MCF 10A (cell line): ENCODE measurements at regions of chr3 and their contacts with region 1.

Region 1: GRCh38 chr3:27134165-27134796 is 234.9 kb downstream of the NEK10 start:
- DNase-seq: peak; percentile 80
- H3K4me3 Mint-ChIP-seq: no peak overlapping the region
- H3K27ac Mint-ChIP-seq: no peak overlapping the region
- H3K4me1 Mint-ChIP-seq: no peaks in the 10 kb centered on the region
- H3K27me3 Mint-ChIP-seq: no peaks in the 10 kb centered on the region
- CTCF ChIP-seq: peak; percentile 82

Region 2: DNA sequence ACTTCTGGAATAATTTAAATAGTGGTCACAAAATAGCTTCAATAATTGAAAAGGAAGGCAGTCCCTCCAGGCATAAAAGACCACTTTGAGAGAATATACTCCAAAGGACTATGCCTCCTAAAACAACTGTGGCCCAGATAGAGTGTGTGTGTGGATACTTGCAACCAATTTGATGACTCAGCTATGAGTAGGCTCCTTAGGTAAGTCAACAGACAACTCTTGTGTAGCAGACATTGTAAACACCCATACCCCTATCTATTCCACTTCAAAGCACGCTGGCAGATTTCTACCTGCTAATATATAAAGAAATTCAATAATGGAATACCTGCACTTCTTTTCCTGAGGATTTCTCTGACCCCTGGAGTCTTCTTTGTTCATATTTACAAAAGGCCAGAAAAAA is 19.6 kb before region 1 on chr3:
- CTCF ChIA-PET with region 1: interaction called, 17 read pairs
- POLR2A ChIA-PET with region 1: no interaction called
- intact Hi-C with region 1: no loop called
- DNase-seq: peak; percentile 38
- H3K4me3 Mint-ChIP-seq: no peak overlapping the region
- H3K27ac Mint-ChIP-seq: no peak overlapping the region
- H3K4me1 Mint-ChIP-seq: peaks cover 9% of the 10 kb centered on the region
- H3K27me3 Mint-ChIP-seq: no peaks in the 10 kb centered on the region
- CTCF ChIP-seq: no peak

Region 3: DNA sequence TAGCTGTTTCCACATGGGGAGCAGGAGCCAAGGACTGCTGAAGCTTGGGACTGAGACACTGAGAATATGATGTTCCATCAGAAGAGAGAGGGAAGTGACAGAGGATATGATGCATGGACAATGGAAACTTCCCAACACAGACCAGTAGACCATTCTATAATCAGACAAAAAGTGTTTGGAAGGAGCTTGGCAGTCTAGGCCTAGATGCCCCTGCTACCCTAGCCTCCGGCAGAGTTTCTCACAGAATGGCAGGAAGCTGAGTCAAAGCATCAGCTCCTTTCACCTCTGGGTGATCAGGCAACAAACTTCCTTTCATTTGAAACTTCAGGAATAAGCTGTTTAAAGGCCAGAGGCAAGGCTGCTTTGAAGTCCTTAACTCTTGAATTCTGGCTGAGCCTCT is 12.9 kb after region 1 on chr3:
- CTCF ChIA-PET with region 1: interaction called, 31 read pairs
- POLR2A ChIA-PET with region 1: no interaction called
- intact Hi-C with region 1: no loop called
- DNase-seq: peak; percentile 31
- H3K4me3 Mint-ChIP-seq: no peak overlapping the region
- H3K27ac Mint-ChIP-seq: no peak overlapping the region
- H3K4me1 Mint-ChIP-seq: no peaks in the 10 kb centered on the region
- H3K27me3 Mint-ChIP-seq: no peaks in the 10 kb centered on the region
- CTCF ChIP-seq: no peak

Region 4: DNA sequence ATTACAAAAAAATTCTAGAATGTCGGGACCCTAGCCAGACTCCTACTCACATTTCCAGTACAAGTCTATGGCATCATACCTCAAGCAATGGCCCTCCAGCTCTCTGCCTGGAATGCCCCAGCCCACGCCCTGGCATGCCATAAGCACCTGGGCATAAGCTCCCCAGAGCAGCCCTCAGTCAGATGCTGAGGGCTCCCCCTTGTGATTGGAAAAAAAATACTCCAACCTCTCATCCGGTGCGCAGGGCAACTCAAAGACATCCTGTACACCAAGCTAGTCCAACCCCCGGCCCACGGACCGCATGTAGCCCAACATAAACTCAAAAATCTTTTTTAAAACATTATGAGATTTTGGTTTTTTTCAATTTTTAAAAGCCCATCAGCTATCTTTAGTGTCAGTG is 119.5 kb after region 1 on chr3:
- CTCF ChIA-PET with region 1: interaction called, 70 read pairs
- POLR2A ChIA-PET with region 1: no interaction called
- intact Hi-C with region 1: loop called (anchors 1 kb)
- DNase-seq: peak; percentile 69
- H3K4me3 Mint-ChIP-seq: no peak overlapping the region
- H3K27ac Mint-ChIP-seq: no peak overlapping the region
- H3K4me1 Mint-ChIP-seq: no peaks in the 10 kb centered on the region
- H3K27me3 Mint-ChIP-seq: no peaks in the 10 kb centered on the region
- CTCF ChIP-seq: peak; percentile 42

Region 5: DNA sequence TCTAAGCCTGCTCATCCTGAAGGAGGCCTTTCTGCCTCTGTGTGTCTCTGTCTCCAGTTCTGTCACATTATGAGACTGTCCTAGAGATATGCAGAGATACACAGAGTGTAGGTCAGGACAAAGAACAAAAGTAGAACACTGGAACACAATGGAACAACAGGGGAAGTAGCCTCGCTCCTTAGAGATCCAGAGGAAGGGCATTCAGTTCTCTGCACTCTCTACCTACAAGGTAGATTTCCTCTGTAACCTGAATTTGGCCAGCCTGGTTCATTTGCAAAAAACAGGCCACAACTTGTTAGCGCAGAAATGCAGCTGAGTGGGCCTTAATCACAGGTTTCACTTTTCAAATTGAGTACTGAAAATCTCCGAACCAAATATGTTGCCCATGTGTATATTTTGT is 215.6 kb after region 1 on chr3:
- CTCF ChIA-PET with region 1: interaction called, 5 read pairs
- POLR2A ChIA-PET with region 1: no interaction called
- intact Hi-C with region 1: loop called (anchors 5 kb)
- DNase-seq: no peak
- H3K4me3 Mint-ChIP-seq: no peak overlapping the region
- H3K27ac Mint-ChIP-seq: no peak overlapping the region
- H3K4me1 Mint-ChIP-seq: peaks cover 19% of the 10 kb centered on the region
- H3K27me3 Mint-ChIP-seq: no peaks in the 10 kb centered on the region
- CTCF ChIP-seq: no peak

Region 6: GRCh38 chr3:27681245-27681748 is 547.0 kb after region 1 on chr3:
- CTCF ChIA-PET with region 1: interaction called, 8 read pairs
- POLR2A ChIA-PET with region 1: no interaction called
- intact Hi-C with region 1: loop called (anchors 1 kb)
- DNase-seq: peak; percentile 86
- H3K4me3 Mint-ChIP-seq: peak overlapping the region; percentile 74
- H3K27ac Mint-ChIP-seq: no peak overlapping the region
- H3K4me1 Mint-ChIP-seq: peaks cover 23% of the 10 kb centered on the region
- H3K27me3 Mint-ChIP-seq: no peaks in the 10 kb centered on the region
- CTCF ChIP-seq: peak; percentile 66